Head of caudate nucleus (tissue), 42 donors: ENCODE measurements at regions of chr17 and their contacts with region 1.

Region 1: GRCh38 chr17:82098072-82098821 is at the start of gene FASN:
- DNase-seq: peak; percentile 78 to 96 (median 91)

Region 2: GRCh38 chr17:81733507-81734404 is 364.5 kb before region 1 on chr17:
- intact Hi-C with region 1: no loop called
- DNase-seq: peak; percentile 64 to 93 (median 86)

Region 3: DNA sequence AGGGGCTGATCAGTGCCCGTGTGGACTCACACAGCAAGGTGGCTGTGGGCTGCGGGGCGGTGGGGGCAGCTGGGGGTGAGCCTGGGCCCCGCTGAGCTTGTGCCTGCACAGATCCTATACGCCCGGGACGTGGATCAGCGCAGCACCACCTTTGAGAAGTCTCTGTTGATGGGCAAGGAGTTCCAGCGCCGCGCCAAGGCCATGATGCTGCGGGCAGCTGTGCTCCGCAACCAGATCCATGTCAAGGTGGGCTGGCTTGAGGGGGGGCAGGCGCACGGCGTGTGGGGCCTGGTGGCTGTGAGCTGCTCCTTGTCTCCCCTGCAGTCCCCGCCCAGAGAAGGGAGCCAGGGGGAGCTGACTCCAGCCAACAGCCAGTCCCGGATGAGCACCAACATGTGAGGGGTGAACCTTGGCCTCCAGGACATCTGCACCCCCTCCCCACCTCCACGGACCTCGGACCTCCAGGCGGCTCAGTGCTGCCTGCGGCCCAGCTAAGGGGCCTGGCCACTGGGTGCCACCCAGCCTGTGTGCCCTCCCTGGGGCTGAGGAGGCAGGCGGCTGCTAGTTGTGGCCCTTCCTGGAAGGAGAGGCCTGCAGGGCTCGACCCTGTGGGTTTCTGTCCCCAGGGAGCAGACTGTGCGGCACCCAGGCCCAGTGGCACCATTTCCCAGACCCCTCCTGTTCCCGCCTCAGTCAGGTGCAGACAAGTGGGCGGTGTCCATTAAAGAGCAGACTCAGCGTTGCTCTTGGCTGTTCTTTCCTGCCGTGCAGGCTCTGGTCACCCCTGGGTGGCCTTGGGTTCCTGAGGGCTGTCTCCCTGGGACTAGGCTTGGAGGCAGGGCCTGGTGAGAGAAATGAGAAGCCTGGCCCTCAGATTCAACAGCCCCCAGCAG is 41.3 kb before region 1 on chr17:
- intact Hi-C with region 1: loop called (anchors 5 kb)
- DNase-seq: no peak

Region 4: DNA sequence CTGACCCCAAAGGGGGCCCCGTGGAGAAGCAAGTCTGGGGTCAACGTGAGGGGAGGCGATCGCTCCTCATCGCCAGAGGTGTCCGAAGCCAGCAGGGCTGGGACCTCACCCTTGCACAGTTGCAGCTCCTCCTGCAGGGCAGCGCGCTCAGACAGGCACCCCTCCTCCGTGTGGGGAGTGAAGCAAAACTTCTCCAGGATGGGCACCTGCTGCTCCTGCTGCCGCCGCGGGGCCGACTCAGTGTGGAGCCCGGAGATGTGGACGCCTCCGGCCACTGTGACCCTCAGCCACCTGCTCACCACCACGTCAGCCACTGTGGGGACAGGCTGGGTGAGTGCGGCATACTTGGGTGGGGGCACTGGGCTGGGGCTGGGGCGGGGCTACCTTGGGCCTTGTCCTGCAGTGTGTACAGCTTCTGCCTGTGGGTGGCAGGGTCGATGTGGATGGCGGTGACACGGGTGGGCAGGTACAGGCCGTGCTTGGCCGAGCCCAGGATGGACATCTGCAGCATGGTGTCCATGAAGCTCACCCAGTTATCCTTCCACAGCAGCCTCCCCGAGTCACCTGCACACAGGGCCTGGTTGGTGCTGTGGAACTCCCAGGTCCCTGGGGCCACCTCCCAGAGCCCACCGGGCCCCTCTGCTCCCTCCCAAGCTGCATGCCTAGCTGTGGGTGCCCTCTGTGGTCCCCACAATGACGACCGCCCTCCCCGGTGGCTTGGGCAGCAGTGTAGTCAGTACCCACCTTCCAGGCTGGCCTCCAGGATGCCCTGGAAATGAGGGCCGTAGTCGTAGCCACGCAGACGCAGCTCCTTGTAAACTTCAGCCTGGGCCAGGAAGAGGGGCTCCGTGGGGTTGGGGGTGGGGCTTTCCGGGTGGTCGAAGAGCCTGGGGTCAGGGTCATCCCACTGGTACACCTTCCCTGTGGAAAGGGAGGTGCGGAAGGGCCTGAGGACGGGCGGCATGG is 11.0 kb before region 1 on chr17:
- intact Hi-C with region 1: no loop called
- DNase-seq: no peak

Region 5: DNA sequence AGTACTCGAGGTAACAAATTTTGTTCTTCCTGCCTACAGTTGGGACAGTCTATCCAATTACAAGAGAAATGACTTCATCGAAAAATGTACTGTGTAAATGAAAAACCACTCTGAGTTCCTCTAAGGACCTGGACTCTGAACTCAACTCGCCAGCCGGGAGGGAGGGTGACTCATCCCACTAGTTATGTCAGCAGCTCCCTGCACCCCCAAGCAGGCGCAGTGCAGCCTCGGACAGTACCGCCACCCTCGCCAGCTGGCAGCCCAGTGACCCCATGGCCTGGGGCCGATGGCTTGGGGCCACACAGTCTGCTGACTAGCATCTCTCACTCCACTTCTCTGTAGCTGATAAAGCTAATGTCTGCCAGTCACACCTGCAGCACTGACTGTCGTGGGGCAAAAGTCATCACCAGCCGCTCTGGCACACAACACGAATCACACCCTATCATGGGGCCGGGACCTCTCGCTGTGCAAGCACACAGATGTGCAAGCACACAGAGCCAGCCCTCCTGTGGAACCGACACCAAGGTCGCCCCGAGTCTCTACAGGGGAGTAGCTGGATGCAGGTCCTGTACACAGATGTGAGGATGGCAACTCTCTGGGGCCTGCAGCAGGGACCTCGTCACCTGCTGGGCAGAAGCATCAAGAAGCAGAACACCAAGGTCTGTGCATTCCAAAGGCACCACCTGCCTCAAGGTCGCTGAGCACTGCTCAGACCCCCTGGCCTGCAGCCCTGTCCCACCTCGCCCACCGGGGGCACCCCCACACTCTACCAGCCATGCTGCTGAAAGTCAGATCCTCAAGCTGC is 169.5 kb after region 1 on chr17:
- intact Hi-C with region 1: no loop called
- DNase-seq: peak; percentile 82 to 97 (median 90)

Region 6: DNA sequence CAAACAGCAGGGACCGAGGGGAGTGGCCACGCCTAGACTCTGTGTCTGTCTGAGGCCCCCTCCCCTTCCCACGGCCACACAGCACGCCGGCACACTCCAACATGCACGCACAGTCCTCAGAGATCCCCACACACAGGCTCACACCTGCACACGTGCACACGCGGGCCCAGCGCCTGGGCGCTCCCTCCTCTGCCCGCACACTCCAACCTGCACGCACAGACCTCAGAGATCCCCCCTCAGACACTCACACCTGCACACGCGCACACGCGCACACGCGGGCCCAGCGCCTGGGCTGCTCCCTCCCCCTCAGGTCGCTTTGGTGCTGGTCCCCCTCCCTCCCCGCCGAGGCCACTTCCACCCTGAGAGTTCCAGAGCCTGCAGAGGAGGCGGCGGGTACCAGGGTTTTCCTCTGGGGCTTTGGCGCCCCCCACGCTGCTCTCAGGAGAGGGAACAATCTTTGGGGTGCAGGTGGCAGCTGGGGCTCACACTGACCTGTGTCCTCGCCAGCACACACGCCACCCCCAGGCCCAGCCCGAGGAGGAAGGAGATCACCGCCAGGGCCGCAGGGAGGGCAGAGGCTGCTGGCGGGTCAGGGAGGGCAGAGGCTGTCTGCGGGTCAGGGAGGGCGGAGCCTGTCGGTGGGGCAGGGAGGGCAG is 217.6 kb after region 1 on chr17:
- intact Hi-C with region 1: no loop called
- DNase-seq: no peak